ENCODE measurements at regions of chr20 and their contacts with region 1.

Region 1: GRCh38 chr20:4581838-4582237 is 139.9 kb upstream of the PRND start:
- DNase-seq: no peak
- H3K4me3 Mint-ChIP-seq: no peak overlapping the region
- H3K27ac Mint-ChIP-seq: no peak overlapping the region
- H3K4me1 Mint-ChIP-seq: peaks cover 3% of the 10 kb centered on the region
- H3K27me3 Mint-ChIP-seq: peaks cover 17% of the 10 kb centered on the region

Region 2: DNA sequence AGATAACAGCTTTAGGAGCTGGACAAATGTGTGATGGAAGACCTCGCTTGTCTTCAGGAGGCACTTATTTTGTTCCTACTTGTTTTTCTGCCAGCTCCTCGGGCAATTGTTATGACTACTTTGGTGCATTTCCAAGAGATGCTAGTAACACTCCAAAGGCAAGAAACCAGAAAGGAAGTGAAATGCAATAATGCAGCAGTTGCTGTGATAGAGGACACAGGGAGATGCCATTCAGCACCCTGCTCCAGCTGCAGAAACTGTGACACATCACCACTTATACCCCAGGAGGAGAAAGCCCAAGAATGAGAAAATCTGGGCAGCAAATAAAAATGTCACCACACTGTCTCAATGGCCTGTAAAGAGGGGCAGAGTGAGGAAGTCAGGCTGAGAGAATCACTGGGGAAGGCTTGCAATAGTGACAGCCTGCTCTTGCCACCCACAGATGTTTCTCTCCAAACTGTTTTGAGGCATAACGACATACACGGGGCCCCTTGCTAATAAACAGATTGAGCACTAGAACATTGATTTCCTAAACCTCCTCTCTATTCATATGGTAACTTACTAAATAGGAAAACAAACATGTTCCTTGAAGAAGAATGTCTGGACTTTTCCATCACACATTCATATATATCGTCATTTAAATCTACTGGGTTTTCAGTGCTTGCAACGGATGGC is 91.1 kb before region 1 on chr20:
- CTCF ChIA-PET with region 1: no interaction called
- intact Hi-C with region 1: loop called (anchors 5 kb)
- DNase-seq: no peak
- H3K4me3 Mint-ChIP-seq: no peak overlapping the region
- H3K27ac Mint-ChIP-seq: no peak overlapping the region
- H3K4me1 Mint-ChIP-seq: no peaks in the 10 kb centered on the region
- H3K27me3 Mint-ChIP-seq: peaks cover 6% of the 10 kb centered on the region

Region 3: DNA sequence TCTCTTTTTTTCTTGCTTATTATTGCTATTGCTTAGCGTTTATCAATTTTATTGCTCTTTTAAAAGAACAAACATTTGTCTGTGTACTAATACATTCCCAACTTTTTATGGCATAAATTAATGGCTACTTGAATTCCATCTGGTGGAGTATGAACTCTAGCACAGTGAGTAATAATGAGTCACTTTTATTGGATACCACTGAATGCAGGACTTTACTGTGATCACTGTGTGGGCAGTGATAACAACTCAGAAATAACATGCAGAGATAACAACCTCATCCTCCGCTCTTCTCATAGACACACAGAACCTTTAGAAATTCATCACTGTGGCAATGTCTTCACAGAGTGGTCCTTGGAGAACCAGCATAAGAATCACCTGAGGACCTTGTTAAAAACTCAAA is 35.1 kb before region 1 on chr20:
- CTCF ChIA-PET with region 1: no interaction called
- intact Hi-C with region 1: no loop called
- DNase-seq: no peak
- H3K4me3 Mint-ChIP-seq: no peak overlapping the region
- H3K27ac Mint-ChIP-seq: no peak overlapping the region
- H3K4me1 Mint-ChIP-seq: no peaks in the 10 kb centered on the region
- H3K27me3 Mint-ChIP-seq: peaks cover 29% of the 10 kb centered on the region

Region 4: GRCh38 chr20:4569092-4569491 is 12.7 kb before region 1 on chr20:
- CTCF ChIA-PET with region 1: no interaction called
- intact Hi-C with region 1: no loop called
- DNase-seq: peak; percentile 23
- H3K4me3 Mint-ChIP-seq: no peak overlapping the region
- H3K27ac Mint-ChIP-seq: no peak overlapping the region
- H3K4me1 Mint-ChIP-seq: no peaks in the 10 kb centered on the region
- H3K27me3 Mint-ChIP-seq: peaks cover 19% of the 10 kb centered on the region

Measured in activated naive CD4-positive, alpha-beta T cell treated with anti-CD3 and anti-CD28 coated beads for 36 hours (primary cell).